Activated B cell treated with CpG ODN at 0.5 μM for 24 hours (primary cell): ENCODE measurements at regions of chr10 and their contacts with region 1.

Region 1: GRCh38 chr10:60237977-60238758 is 151.5 kb downstream of the ANK3 start:
- DNase-seq: peak; percentile 23
- ATAC-seq: peak; percentile 51
- H3K4me3 Mint-ChIP-seq: peak overlapping the region; percentile 67
- H3K27ac Mint-ChIP-seq: peak overlapping the region; percentile 93
- H3K4me1 Mint-ChIP-seq: peaks cover 61% of the 10 kb centered on the region
- H3K27me3 Mint-ChIP-seq: no peaks in the 10 kb centered on the region
- CTCF ChIP-seq: no peak

Region 2: GRCh38 chr10:58384999-58385783 is 1853.0 kb before region 1 on chr10 and contains the start of gene TFAM:
- CTCF ChIA-PET with region 1: no interaction called
- POLR2A ChIA-PET with region 1: no interaction called
- intact Hi-C with region 1: loop called (anchors 2 kb)
- DNase-seq: peak; percentile 97
- ATAC-seq: peak; percentile 84
- H3K4me3 Mint-ChIP-seq: peak within 1 kb of the TSS; percentile 98
- H3K27ac Mint-ChIP-seq: peak within 1 kb of the TSS; percentile 97
- H3K4me1 Mint-ChIP-seq: peaks cover 41% of the 10 kb centered on the region
- H3K27me3 Mint-ChIP-seq: no peaks in the 10 kb centered on the region
- CTCF ChIP-seq: no peak
- total RNA-seq, gene TFAM: 59.5 and 60.2 TPM in 2 replicates

Region 3: DNA sequence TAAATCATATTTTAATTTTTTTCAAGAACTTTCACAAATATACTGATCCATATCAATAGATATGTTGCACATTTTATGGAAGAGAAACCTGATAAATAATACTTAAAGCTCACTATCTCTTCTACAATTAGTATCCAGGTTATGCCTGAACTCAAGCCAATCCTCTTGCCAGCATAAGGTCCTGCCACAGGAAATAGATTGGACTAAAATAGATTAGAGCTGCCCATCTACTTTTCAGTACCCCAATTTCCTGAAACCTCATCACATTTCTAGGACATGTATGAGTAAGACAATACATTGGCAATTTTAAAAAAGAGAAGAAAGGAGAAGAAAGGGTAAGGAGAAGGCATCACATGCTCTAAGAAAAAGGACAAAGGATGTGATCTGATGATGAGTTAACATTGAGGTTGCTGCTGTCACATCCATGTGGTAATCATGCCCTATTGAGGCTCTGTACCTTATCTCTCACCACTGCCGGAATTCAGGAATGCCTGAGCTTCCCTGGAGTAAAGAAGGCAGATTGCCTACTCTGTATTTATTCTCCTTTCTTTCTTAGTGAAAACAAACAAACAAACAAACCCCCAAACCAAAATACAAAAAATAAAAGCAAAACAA is 48.2 kb before region 1 on chr10:
- CTCF ChIA-PET with region 1: no interaction called
- POLR2A ChIA-PET with region 1: no interaction called
- intact Hi-C with region 1: no loop called
- DNase-seq: no peak
- ATAC-seq: no peak
- H3K4me3 Mint-ChIP-seq: no peak overlapping the region
- H3K27ac Mint-ChIP-seq: no peak overlapping the region
- H3K4me1 Mint-ChIP-seq: no peaks in the 10 kb centered on the region
- H3K27me3 Mint-ChIP-seq: peaks cover 3% of the 10 kb centered on the region
- CTCF ChIP-seq: no peak

Region 4: GRCh38 chr10:60222047-60222446 is 16.1 kb before region 1 on chr10:
- CTCF ChIA-PET with region 1: interaction called, 4 read pairs
- POLR2A ChIA-PET with region 1: interaction called, 3 read pairs
- intact Hi-C with region 1: loop called (anchors 2 kb)
- DNase-seq: no peak
- ATAC-seq: no peak
- H3K4me3 Mint-ChIP-seq: no peak overlapping the region
- H3K27ac Mint-ChIP-seq: no peak overlapping the region
- H3K4me1 Mint-ChIP-seq: peaks cover 31% of the 10 kb centered on the region
- H3K27me3 Mint-ChIP-seq: no peaks in the 10 kb centered on the region
- CTCF ChIP-seq: no peak

Region 5: DNA sequence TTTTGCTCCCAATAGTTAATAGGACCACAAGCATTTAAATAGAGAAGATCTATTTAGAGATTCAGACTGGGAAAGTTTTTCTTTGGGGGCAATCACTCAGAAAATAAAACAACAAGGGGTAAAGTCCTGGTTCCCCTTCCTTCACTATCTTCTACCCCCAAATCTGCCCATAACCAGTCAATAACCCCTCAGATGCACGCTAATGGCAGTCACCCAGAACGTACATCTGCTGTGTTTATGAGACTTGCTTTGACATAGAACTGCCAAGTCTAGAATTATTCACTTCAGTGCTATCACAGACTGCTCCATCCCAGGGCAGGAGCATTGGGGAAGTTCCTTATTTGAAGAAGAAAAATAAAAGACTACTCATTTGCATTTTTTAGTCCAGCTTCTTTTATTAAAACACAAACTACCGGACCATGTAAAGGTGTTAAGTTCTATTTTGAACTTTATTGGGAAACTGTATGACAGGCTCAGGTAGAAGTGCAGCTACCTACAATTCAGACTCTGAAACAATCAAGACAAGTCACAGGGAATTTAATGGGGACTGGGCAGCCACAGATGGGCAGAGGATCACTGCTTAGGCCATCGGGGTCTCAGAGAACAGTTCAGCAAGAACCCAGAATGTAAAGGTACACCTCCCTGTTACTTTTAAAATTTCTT is 113.2 kb after region 1 on chr10:
- CTCF ChIA-PET with region 1: interaction called, 10 read pairs
- POLR2A ChIA-PET with region 1: interaction called, 24 read pairs
- intact Hi-C with region 1: loop called (anchors 1 kb)
- DNase-seq: no peak
- ATAC-seq: peak; percentile 92
- H3K4me3 Mint-ChIP-seq: peak overlapping the region; percentile 47
- H3K27ac Mint-ChIP-seq: peak overlapping the region; percentile 87
- H3K4me1 Mint-ChIP-seq: peaks cover 49% of the 10 kb centered on the region
- H3K27me3 Mint-ChIP-seq: no peaks in the 10 kb centered on the region
- CTCF ChIP-seq: no peak

Region 6: DNA sequence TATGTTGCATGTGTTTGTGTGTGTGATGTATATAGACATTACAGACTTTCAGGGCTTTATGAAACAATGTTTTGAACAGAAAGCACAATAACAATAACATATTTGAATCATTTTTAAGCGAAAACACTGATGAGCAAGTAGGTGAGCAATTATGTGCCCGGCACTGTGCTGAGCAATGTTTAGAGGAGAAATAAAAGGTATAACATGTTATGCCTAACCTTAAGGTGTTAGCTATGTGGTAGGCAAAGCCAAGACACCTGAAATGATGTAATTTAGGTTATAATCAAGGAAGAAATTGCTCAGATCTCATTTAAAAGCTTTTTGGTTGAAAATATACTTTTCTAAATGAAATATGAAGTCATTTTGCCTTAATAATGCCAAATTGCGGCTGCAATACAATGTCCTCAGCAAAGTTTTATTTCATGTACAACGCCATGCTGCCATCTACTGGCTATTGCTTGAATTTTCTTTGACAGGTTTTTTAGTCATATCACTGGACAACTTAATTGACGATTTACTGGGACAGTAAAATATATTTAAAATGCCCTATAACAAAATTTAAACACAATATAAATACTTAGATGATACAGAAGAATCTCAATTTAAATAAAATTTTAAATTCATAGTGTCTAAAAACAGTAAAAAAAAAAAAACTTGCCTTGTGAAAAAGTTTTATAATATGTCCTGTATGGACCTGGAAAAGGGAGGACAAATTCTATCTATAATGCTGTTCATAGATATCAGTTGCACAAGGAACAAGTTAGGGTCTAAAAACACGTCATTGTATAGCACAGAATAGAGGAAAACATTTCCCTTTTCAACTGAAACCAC is 409.0 kb after region 1 on chr10:
- CTCF ChIA-PET with region 1: interaction called, 25 read pairs
- POLR2A ChIA-PET with region 1: interaction called, 3 read pairs
- intact Hi-C with region 1: loop called (anchors 1 kb)
- DNase-seq: no peak
- ATAC-seq: peak; percentile 42
- H3K4me3 Mint-ChIP-seq: no peak overlapping the region
- H3K27ac Mint-ChIP-seq: no peak overlapping the region
- H3K4me1 Mint-ChIP-seq: peaks cover 1% of the 10 kb centered on the region
- H3K27me3 Mint-ChIP-seq: no peaks in the 10 kb centered on the region
- CTCF ChIP-seq: peak; percentile 79

Region 7: DNA sequence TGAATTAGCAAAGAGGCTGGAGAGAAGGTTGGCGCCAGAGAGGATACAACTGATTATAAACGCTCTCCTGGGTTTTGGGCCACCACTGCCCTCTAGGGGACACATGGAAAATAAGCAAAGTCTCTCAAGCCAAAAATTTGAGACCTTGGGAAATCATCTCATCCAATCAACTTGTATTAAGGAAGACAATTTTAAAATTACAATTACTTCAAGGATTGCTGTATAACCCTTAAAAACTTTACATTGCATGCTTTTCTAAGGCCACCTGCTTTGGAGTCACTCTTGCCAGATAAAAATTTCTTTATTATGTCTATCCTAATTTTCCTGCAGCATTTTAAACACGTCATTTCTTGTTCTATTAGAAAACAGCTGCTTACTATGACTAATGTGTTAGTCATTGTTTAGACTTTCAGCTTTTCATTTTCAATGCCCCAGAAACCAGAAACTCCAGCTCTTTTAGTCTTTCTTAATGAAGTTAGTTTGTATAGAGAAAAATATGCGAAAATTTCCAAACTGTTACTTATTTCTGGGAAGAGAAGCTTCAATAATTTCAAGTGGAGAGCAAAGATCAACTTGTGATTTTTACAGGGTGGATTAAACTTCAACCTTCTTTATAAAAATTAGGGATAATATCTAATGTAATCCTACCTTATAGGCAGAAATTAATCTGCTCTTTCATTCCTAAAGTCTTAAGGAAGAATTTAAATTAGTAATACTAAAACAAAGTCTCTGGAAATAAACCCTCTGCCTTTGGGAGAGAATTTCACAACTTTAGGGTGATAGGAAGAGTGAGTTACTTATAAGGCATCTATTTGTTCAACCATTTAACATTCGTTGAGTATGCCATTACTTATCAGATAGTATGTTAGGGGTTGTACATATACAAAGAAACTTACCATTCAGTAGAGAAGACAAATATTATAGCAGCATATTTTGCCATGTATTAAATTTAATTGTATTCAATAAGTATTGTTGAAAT is 726.4 kb after region 1 on chr10:
- CTCF ChIA-PET with region 1: interaction called, 4 read pairs
- POLR2A ChIA-PET with region 1: no interaction called
- intact Hi-C with region 1: loop called (anchors 5 kb)
- DNase-seq: no peak
- ATAC-seq: peak; percentile 59
- H3K4me3 Mint-ChIP-seq: no peak overlapping the region
- H3K27ac Mint-ChIP-seq: no peak overlapping the region
- H3K4me1 Mint-ChIP-seq: peaks cover 22% of the 10 kb centered on the region
- H3K27me3 Mint-ChIP-seq: peaks cover 8% of the 10 kb centered on the region
- CTCF ChIP-seq: peak; percentile 85